Activated CD4-positive, alpha-beta T cell treated with anti-CD3 and anti-CD28 coated beads for 36 hours (primary cell): ENCODE measurements at regions of chr3 and their contacts with region 1.

Region 1: GRCh38 chr3:107676469-107677309 is 153.9 kb downstream of the BBX start:
- DNase-seq: no peak
- ATAC-seq: peak; percentile 49
- H3K4me3 Mint-ChIP-seq: no peak overlapping the region
- H3K27ac Mint-ChIP-seq: no peak overlapping the region
- H3K4me1 Mint-ChIP-seq: peaks cover 34% of the 10 kb centered on the region
- H3K27me3 Mint-ChIP-seq: no peaks in the 10 kb centered on the region

Region 2: GRCh38 chr3:107660306-107660976 is 16.2 kb before region 1 on chr3:
- CTCF ChIA-PET with region 1: interaction called, 46 read pairs
- POLR2A ChIA-PET with region 1: no interaction called
- intact Hi-C with region 1: no loop called
- DNase-seq: no peak
- ATAC-seq: no peak
- H3K4me3 Mint-ChIP-seq: no peak overlapping the region
- H3K27ac Mint-ChIP-seq: no peak overlapping the region
- H3K4me1 Mint-ChIP-seq: peaks cover 26% of the 10 kb centered on the region
- H3K27me3 Mint-ChIP-seq: no peaks in the 10 kb centered on the region

Region 3: DNA sequence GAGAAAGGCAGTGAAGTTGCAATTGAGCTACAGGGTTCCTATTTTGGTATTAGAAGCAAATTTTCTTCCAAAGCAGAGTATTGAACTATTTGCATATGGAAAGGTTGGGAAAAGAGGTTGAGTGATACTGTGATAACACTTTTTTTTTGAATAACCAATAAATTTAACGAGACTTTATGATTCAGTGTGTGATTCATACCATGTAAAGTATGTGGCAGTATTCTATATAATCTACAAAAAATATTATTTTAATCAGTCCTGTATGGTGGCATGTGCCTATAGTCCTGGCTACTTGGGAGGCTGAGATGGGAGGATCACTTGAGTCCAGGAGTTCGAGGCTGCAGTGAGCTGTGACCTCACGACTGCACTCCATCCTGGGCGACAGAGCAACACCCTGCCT is 53.0 kb after region 1 on chr3:
- CTCF ChIA-PET with region 1: interaction called, 10 read pairs
- POLR2A ChIA-PET with region 1: no interaction called
- intact Hi-C with region 1: no loop called
- DNase-seq: no peak
- ATAC-seq: no peak
- H3K4me3 Mint-ChIP-seq: no peak overlapping the region
- H3K27ac Mint-ChIP-seq: no peak overlapping the region
- H3K4me1 Mint-ChIP-seq: peaks cover 23% of the 10 kb centered on the region
- H3K27me3 Mint-ChIP-seq: no peaks in the 10 kb centered on the region

Region 4: GRCh38 chr3:107753480-107753879 is 76.8 kb after region 1 on chr3:
- CTCF ChIA-PET with region 1: interaction called, 26 read pairs
- POLR2A ChIA-PET with region 1: no interaction called
- intact Hi-C with region 1: no loop called
- DNase-seq: peak; percentile 49
- ATAC-seq: peak; percentile 64
- H3K4me3 Mint-ChIP-seq: no peak overlapping the region
- H3K27ac Mint-ChIP-seq: no peak overlapping the region
- H3K4me1 Mint-ChIP-seq: no peaks in the 10 kb centered on the region
- H3K27me3 Mint-ChIP-seq: no peaks in the 10 kb centered on the region

Region 5: GRCh38 chr3:107927361-107928083 is 250.8 kb after region 1 on chr3:
- CTCF ChIA-PET with region 1: no interaction called
- POLR2A ChIA-PET with region 1: no interaction called
- intact Hi-C with region 1: loop called in 1 of 2 experiments (anchors 10 kb)
- DNase-seq: peak; percentile 86
- ATAC-seq: peak; percentile 92
- H3K4me3 Mint-ChIP-seq: peak overlapping the region; percentile 73
- H3K27ac Mint-ChIP-seq: peak overlapping the region; percentile 76
- H3K4me1 Mint-ChIP-seq: peaks cover 9% of the 10 kb centered on the region
- H3K27me3 Mint-ChIP-seq: peaks cover 4% of the 10 kb centered on the region

Region 6: GRCh38 chr3:108477511-108478147 is 800.9 kb after region 1 on chr3:
- CTCF ChIA-PET with region 1: no interaction called
- POLR2A ChIA-PET with region 1: no interaction called
- intact Hi-C with region 1: loop called (anchors 10 kb)
- DNase-seq: peak; percentile 78
- ATAC-seq: peak; percentile 79
- H3K4me3 Mint-ChIP-seq: no peak overlapping the region
- H3K27ac Mint-ChIP-seq: no peak overlapping the region
- H3K4me1 Mint-ChIP-seq: no peaks in the 10 kb centered on the region
- H3K27me3 Mint-ChIP-seq: peaks cover 2% of the 10 kb centered on the region